Caco-2 (cell line): ENCODE measurements at regions of chr9 and their contacts with region 1.

Region 1: DNA sequence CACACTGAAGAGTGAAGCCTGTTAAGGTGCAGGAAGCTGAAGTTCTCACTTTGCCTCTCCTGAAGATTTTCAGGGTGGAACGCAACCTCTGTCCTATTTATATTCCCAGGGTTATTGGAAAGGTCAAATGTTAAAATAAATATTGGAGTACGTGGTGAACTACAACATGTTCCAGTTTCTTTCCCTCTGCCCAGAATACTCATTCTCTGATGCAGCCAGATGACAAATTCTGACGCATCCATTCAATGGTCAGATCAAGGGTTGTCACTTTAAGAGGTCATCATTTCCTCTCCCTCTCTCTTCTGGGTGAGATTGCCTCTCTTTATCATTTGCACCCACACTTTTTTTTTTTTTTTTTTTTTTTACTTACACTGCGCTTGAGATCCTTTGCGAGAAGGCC is 277.1 kb downstream of the BRINP1 start:
- DNase-seq: no peak
- H3K4me3 ChIP-seq: no peak overlapping the region
- H3K4me3 Mint-ChIP-seq: no peak overlapping the region
- H3K27ac Mint-ChIP-seq: no peak overlapping the region
- H3K4me1 ChIP-seq: no peaks in the 10 kb centered on the region
- H3K4me1 Mint-ChIP-seq: no peaks in the 10 kb centered on the region
- H3K27me3 ChIP-seq: no peaks in the 10 kb centered on the region
- H3K27me3 Mint-ChIP-seq: peaks cover 3% of the 10 kb centered on the region
- CTCF ChIP-seq: no peak

Region 2: GRCh38 chr9:118992813-118993794 is 99.0 kb before region 1 on chr9:
- CTCF ChIA-PET with region 1: no interaction called
- POLR2A ChIA-PET with region 1: no interaction called
- intact Hi-C with region 1: no loop called
- DNase-seq: no peak
- H3K4me3 ChIP-seq: no peak overlapping the region
- H3K4me3 Mint-ChIP-seq: no peak overlapping the region
- H3K27ac Mint-ChIP-seq: no peak overlapping the region
- H3K4me1 ChIP-seq: no peaks in the 10 kb centered on the region
- H3K4me1 Mint-ChIP-seq: no peaks in the 10 kb centered on the region
- H3K27me3 ChIP-seq: no peaks in the 10 kb centered on the region
- H3K27me3 Mint-ChIP-seq: peaks cover 11% of the 10 kb centered on the region
- CTCF ChIP-seq: no peak

Region 3: GRCh38 chr9:119126040-119126439 is 33.9 kb after region 1 on chr9:
- CTCF ChIA-PET with region 1: no interaction called
- POLR2A ChIA-PET with region 1: interaction called, 13 read pairs
- intact Hi-C with region 1: no loop called
- DNase-seq: no peak
- H3K4me3 ChIP-seq: no peak overlapping the region
- H3K4me3 Mint-ChIP-seq: no peak overlapping the region
- H3K27ac Mint-ChIP-seq: no peak overlapping the region
- H3K4me1 ChIP-seq: no peaks in the 10 kb centered on the region
- H3K4me1 Mint-ChIP-seq: no peaks in the 10 kb centered on the region
- H3K27me3 ChIP-seq: no peaks in the 10 kb centered on the region
- H3K27me3 Mint-ChIP-seq: peaks cover 10% of the 10 kb centered on the region
- CTCF ChIP-seq: no peak

Region 4: GRCh38 chr9:119409403-119409951 is 317.4 kb after region 1 on chr9:
- CTCF ChIA-PET with region 1: no interaction called
- POLR2A ChIA-PET with region 1: no interaction called
- intact Hi-C with region 1: no loop called
- DNase-seq: no peak
- H3K4me3 ChIP-seq: no peak overlapping the region
- H3K4me3 Mint-ChIP-seq: no peak overlapping the region
- H3K27ac Mint-ChIP-seq: no peak overlapping the region
- H3K4me1 ChIP-seq: no peaks in the 10 kb centered on the region
- H3K4me1 Mint-ChIP-seq: no peaks in the 10 kb centered on the region
- H3K27me3 ChIP-seq: no peaks in the 10 kb centered on the region
- H3K27me3 Mint-ChIP-seq: peaks cover 8% of the 10 kb centered on the region
- CTCF ChIP-seq: no peak

Region 5: DNA sequence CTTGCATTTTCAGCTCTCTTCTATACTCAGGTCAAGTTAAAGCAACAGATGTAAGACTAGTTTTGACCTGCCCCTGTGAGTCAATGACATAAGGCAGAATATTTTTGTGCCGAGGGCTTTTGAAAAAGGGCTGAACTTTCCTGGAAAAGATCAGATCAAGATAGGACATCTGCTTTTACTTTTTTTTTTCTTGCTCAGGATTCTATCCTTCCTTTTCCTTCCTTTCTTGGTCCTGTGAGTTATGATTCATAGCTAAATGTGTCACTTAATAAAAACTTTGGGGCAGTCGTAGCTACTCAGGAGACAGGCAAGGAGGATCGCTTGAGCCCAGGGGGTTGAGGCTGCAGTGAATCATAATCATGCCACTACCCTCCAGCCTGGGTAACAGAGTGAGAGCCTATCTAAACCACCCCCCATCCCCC is 361.4 kb after region 1 on chr9:
- CTCF ChIA-PET with region 1: no interaction called
- POLR2A ChIA-PET with region 1: no interaction called
- intact Hi-C with region 1: no loop called
- DNase-seq: no peak
- H3K4me3 ChIP-seq: no peak overlapping the region
- H3K4me3 Mint-ChIP-seq: no peak overlapping the region
- H3K27ac Mint-ChIP-seq: no peak overlapping the region
- H3K4me1 ChIP-seq: no peaks in the 10 kb centered on the region
- H3K4me1 Mint-ChIP-seq: no peaks in the 10 kb centered on the region
- H3K27me3 ChIP-seq: no peaks in the 10 kb centered on the region
- H3K27me3 Mint-ChIP-seq: peaks cover 4% of the 10 kb centered on the region
- CTCF ChIP-seq: no peak